Esophagus muscularis mucosa (tissue), 4 donors: ENCODE measurements at regions of chr11 and their contacts with region 1.

Region 1: DNA sequence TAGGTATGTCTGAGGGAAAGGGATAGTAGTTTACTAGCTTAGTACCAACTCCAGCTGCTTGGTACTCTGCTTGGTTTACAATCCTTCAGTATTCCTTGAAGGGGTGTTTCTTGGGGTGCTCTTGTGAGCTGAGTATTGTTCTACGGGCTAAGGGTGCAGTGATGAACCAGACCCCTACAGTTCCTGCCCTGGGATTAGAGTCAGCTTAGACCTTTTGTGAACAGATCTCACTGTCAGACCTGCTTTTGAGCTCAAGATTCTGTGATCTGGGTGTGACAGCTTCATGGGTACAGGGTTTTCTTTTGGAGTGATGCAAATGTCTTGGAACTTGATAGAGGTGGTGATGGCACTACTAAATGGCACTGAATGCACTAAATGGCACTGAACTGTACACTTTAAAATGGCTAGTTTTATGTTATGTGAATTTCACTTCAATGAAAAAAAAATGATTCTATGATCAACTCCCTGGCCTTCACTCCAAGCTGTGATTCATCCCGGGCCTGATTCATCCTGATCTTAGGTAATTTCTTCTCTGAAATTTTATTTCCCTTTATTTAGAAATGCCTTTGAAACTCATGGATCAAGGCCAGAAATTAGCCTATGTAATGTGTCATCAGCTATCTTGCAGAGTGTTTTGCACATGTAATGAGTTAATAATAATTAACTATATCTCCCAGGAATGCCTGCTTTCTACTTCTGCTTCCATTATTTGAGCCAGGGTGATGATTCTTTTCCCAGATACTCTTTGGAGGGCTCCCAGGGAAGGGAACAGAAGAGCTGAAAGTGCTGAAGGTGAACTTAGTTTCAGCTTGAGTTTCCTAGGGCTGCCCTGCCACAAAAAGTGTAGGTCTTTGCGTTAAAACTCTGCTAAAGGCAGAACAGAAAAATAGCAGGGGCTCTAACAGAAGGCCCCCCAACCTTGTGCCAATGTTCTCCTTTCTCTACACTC is 87.9 kb downstream of the NCAM1 start:
- DNase-seq: no peak
- H3K4me3 ChIP-seq: no peak overlapping the region
- H3K27ac ChIP-seq: peak overlapping the region in 2 of 4 donors; percentile 7 to 52
- H3K4me1 ChIP-seq: peaks cover 0 to 12% (median 8%) of the 10 kb centered on the region in 4 donors
- H3K27me3 ChIP-seq: no peaks in the 10 kb centered on the region
- CTCF ChIP-seq: no peak
- EP300 ChIP-seq: no peak
- POLR2A ChIP-seq: no peak

Region 2: GRCh38 chr11:112302231-112302732 is 746.8 kb before region 1 on chr11:
- intact Hi-C with region 1: loop called (anchors 5 kb)
- DNase-seq: no peak
- H3K4me3 ChIP-seq: no peak overlapping the region
- H3K27ac ChIP-seq: peak overlapping the region in 2 of 4 donors; percentile 17 to 45
- H3K4me1 ChIP-seq: peaks cover 16 to 35% (median 29%) of the 10 kb centered on the region in 4 donors
- H3K27me3 ChIP-seq: no peaks in the 10 kb centered on the region
- CTCF ChIP-seq: no peak
- EP300 ChIP-seq: no peak
- POLR2A ChIP-seq: no peak